HepG2 (cell line): ENCODE measurements at regions of chr10 and their contacts with region 1.

Region 1: DNA sequence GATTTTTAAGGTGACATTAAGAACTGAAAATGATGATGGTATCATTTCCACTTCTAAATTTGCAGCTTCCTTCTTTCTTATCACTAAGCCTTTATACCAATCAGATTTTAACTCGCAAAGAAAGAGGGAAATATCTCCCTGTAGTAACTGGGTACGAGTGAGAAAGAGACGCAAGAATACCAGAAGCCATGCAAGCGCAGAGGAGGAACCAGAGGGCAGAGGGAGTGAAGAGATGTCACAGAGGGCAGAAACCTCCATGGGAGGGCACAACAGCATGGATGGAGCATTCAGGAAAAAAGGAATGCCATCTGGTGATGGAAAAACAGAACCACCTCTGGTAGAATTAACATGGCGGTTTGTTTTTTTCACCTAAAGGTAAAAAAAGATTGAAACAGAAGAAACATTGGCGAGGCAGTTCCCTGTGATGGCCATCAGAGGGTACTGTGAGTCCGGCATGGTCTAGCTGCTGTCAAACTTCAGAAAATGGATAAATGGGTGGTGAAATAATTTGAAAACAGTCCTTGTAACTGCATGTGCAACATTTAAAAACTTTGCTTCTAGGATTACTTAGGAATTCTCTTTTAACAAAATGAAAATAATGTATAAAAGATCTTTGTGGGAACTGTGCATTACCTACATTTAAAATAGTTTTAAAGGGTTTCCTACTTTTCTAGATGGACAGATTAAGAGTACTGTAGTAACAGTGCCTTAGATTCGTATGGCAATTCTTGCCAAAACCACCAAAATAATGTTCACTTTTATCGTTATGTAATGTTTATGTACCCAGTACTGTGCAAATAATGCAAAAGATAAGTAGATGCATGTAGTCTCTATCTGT is 91.8 kb downstream of the ARHGAP12 start:
- DNase-seq: peak; percentile 36
- ATAC-seq: peak; percentile 82
- H3K4me3 ChIP-seq: no peak overlapping the region
- H3K27ac ChIP-seq: no peak overlapping the region
- H3K4me1 ChIP-seq: no peaks in the 10 kb centered on the region
- H3K27me3 ChIP-seq: no peaks in the 10 kb centered on the region
- CTCF ChIP-seq: peak; percentile 60
- EP300 ChIP-seq: no peak
- POLR2A ChIP-seq: no peak
- RAD21 ChIP-seq: peak; percentile 66

Region 2: DNA sequence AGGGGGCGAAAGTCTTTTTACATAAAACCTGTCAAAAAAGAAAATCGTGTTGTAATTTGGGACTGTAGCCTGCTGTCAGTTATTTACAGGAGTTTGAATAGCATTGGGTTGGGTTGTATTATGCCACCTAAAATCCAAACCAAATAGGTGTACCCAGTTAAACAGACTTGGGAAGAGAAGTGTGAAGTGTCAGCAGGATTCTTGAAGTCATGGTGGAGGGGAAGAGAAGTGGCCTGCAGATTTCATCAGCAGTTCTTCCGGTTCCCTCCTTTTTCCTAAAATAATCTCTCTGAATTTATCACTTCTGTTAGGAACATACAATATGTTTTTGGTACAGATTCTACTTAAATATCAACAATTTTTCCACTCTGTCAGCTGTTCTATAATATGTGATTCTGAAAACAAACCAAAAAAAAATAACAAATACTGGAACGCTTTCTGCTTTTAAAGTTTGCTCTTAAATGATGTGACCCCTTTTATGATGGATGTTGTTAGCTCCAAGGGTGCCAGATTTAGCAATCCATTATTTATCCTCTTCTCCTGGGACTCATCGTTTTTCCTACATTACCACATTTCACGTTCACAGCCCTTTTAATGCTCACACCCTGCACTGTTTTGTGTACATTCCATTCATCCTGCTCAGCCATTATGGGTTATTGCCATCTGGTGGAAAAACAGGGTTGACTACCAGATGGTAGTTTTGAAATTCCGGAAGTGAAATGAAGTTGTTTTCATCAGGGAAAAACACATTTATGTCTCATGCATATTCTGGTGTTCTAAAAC is 110.5 kb after region 1 on chr10:
- CTCF ChIA-PET with region 1: interaction called, 3 read pairs
- POLR2A ChIA-PET with region 1: no interaction called
- in situ Hi-C with region 1: no loop called
- intact Hi-C with region 1: loop called (anchors 1 kb)
- DNase-seq: peak; percentile 82
- ATAC-seq: peak; percentile 87
- H3K4me3 ChIP-seq: no peak overlapping the region
- H3K27ac ChIP-seq: peak overlapping the region; percentile 33
- H3K4me1 ChIP-seq: peaks cover 64% of the 10 kb centered on the region
- H3K27me3 ChIP-seq: no peaks in the 10 kb centered on the region
- CTCF ChIP-seq: peak; percentile 85
- EP300 ChIP-seq: peak in 1 of 2 experiments; percentile 42; a peak in 2 of 4 replicates
- POLR2A ChIP-seq: no peak
- RAD21 ChIP-seq: peak; percentile 85

Region 3: DNA sequence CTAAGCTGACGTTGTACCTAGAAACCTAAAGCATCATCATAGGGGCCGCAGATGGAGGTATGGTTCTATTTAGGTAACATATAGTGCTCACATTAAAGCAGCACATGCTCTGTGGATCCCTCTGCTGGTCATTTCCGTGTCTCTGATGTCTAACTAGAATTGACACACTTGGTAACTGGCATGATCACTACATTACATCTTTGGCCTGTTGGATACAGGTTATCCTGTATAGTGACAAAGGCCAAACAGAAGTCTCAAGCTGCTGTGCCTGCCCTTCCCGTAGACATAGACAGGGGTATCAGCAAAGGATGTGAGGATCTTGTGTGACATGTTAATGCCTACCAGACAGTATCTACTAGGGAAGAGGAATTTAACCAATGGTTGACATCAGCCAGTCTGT is 168.3 kb after region 1 on chr10:
- CTCF ChIA-PET with region 1: interaction called, 6 read pairs
- POLR2A ChIA-PET with region 1: no interaction called
- in situ Hi-C with region 1: no loop called
- intact Hi-C with region 1: loop called (anchors 2 kb)
- DNase-seq: peak; percentile 58
- ATAC-seq: peak; percentile 76
- H3K4me3 ChIP-seq: no peak overlapping the region
- H3K27ac ChIP-seq: no peak overlapping the region
- H3K4me1 ChIP-seq: 0 out of 2 replicates have a peak, but pooled peaks cover 9% of the 10 kb centered on the region
- H3K27me3 ChIP-seq: no peaks in the 10 kb centered on the region
- CTCF ChIP-seq: peak; percentile 66
- EP300 ChIP-seq: no peak
- POLR2A ChIP-seq: peak in 1 of 2 experiments; percentile 24; a peak in 2 of 4 replicates
- RAD21 ChIP-seq: peak; percentile 34; the same call in 1 of the 2 replicates

Region 4: GRCh38 chr10:32015386-32015785 is 178.6 kb after region 1 on chr10:
- CTCF ChIA-PET with region 1: no interaction called
- POLR2A ChIA-PET with region 1: no interaction called
- in situ Hi-C with region 1: no loop called
- intact Hi-C with region 1: no loop called
- DNase-seq: no peak
- ATAC-seq: no peak
- H3K4me3 ChIP-seq: no peak overlapping the region
- H3K27ac ChIP-seq: no peak overlapping the region
- H3K4me1 ChIP-seq: no peaks in the 10 kb centered on the region
- H3K27me3 ChIP-seq: no peaks in the 10 kb centered on the region
- CTCF ChIP-seq: no peak
- EP300 ChIP-seq: no peak
- POLR2A ChIP-seq: no peak
- RAD21 ChIP-seq: no peak

Region 5: DNA sequence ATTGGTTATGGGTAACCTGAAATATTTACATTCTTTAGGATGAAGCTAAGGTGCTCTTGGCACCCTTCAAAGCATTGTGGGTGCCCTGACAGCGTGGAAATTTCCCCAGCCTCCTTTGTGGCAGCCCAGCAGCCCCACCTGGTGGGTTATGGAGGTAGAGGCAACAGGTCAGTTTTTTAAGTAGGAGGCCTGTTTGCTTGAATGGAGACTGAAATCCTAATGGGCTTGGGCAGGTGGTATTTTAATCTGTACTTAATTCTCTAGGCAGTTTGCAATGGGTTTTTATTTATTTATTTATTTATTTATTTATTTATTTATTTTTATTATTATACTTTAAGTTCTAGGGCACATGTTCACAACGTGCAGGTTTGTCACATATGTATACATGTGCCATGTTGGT is 370.8 kb after region 1 on chr10:
- CTCF ChIA-PET with region 1: interaction called, 3 read pairs
- POLR2A ChIA-PET with region 1: no interaction called
- in situ Hi-C with region 1: loop called (anchors 25 kb)
- intact Hi-C with region 1: loop called (anchors 5 kb)
- DNase-seq: peak; percentile 59
- ATAC-seq: peak; percentile 81
- H3K4me3 ChIP-seq: peak overlapping the region in 1 of 3 experiments; percentile 20; a peak in 1 of 6 replicates
- H3K27ac ChIP-seq: no peak overlapping the region
- H3K4me1 ChIP-seq: peaks cover 35% of the 10 kb centered on the region
- H3K27me3 ChIP-seq: 0 out of 5 replicates have a peak, but pooled peaks cover 0 to 1% of the 10 kb centered on the region in 2 experiments
- CTCF ChIP-seq: peak; percentile 86
- EP300 ChIP-seq: no peak
- POLR2A ChIP-seq: no peak
- RAD21 ChIP-seq: peak; percentile 84